Prostate gland (tissue), 2 donors: ENCODE measurements at regions of chr5 and their contacts with region 1.

Region 1: DNA sequence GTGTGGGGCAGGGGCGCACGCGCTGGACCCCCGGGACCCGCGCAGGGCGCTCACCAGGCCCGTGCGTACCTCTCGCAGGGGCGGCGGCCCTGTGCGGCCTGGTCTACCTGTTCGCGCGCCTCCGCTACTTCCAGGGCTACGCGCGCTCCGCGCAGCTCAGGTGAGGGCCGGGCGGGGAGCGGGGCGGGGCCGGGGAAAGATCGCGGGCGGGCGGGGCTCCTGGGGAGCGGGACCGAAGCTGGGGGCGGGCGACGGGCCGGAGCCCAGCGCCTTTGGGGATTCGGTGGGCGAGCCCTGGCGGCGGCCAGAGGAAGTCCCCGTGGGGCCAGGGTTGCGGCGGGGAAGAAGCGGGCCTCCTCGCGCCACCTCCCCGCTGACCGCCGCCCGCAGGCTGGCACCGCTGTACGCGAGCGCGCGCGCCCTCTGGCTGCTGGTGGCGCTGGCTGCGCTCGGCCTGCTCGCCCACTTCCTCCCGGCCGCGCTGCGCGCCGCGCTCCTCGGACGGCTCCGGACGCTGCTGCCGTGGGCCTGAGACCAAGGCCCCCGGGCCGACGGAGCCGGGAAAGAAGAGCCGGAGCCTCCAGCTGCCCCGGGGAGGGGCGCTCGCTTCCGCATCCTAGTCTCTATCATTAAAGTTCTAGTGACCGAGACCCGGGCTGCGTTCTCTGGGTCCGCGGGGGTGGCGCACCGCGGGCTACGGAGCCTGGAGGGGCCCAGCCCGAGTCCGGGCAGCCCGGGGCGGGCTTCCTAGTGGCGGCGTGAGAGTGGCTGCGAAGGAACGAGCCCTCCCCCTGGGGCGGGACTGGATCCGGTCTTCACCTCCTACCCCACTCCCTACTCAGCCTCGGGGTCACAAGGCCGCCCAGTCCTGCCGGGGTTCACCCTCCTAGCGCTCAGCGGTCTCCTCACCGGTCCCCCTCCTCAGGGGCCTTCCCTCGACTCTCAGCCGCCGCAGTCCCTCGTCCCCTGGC is 2.4 kb downstream of the LTC4S start:
- DNase-seq: peak; percentile 81
- H3K4me3 ChIP-seq: peak overlapping the region; percentile 44 to 57
- H3K27ac ChIP-seq: peak overlapping the region; percentile 94
- H3K4me1 ChIP-seq: peaks cover 12% of the 10 kb centered on the region
- H3K27me3 ChIP-seq: no peaks in the 10 kb centered on the region
- CTCF ChIP-seq: peak; percentile 86 to 96 (median 92)
- POLR2A ChIP-seq: peak; percentile 44

Region 2: DNA sequence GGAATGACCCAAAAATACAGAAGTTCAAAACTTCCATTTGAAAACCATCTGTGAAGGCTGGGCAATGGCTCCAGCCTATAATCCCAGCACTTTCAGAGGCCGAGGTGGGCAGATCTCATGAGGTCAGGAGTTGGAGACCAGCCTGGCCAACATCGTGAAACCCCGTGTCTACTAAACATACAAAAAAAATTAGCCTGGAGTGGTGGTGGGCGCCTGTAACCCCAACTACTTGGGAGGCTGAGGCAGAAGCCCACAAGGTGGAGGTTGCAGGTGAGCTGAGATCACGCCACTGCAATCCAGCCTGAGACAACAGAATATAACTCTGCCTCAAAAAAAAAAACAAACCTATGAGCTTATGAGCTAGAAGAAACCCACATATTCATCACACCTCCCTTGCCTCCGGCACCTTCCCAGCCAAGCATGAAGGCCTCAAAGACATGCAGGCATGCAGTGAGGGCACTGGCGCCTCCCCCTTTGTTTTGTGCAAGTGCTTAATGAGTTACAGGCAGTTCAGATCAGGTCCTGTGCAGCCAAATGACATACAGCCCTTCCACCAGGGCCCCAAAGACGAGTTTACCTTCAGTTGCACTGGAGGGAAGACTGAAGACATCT is 182.6 kb before region 1 on chr5:
- intact Hi-C with region 1: no loop called
- DNase-seq: no peak
- H3K4me3 ChIP-seq: no peak overlapping the region
- H3K27ac ChIP-seq: no peak overlapping the region
- H3K4me1 ChIP-seq: peaks cover 4% of the 10 kb centered on the region
- H3K27me3 ChIP-seq: no peaks in the 10 kb centered on the region
- CTCF ChIP-seq: no peak
- POLR2A ChIP-seq: no peak

Region 3: DNA sequence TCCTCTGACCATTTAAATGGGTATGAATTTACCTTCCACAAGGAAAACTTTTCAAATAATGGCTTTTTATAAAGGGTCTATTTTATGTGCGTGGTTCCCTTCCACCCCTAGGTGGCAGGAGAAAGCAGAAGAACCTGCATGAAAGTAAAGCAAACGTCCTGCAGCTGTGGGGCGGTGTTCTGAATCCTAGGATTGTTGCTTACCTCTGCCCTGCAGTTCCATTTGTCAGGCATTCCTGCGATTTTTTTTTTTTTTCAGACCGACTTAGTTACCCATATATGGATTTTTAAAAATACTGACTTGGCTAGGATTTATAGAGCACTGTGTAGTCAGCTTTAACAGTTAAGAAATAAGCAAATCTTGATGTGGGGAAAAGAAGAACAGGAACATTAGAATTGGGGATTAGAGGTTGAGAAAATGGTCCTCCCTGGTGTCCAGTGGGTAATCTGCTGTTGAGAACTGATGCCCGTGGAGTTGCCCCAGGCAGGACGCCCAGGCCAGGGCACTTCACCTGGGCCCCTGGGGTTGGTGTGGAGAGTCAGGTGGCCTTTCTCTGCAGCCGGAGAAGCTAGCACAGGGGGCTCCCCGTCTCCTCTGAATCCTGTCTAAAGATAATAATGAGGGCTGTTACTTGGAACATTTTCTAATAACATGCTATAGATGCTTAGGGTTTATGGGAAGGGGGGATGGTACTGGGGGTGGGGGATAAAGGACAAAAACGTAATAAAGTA is 32.8 kb before region 1 on chr5:
- intact Hi-C with region 1: loop called (anchors 5 kb)
- DNase-seq: peak; percentile 67
- H3K4me3 ChIP-seq: no peak overlapping the region
- H3K27ac ChIP-seq: peak overlapping the region in 1 of 2 donors; percentile 15
- H3K4me1 ChIP-seq: peaks cover 6% of the 10 kb centered on the region
- H3K27me3 ChIP-seq: no peaks in the 10 kb centered on the region
- CTCF ChIP-seq: peak; percentile 56 to 88 (median 83)
- POLR2A ChIP-seq: no peak

Region 4: DNA sequence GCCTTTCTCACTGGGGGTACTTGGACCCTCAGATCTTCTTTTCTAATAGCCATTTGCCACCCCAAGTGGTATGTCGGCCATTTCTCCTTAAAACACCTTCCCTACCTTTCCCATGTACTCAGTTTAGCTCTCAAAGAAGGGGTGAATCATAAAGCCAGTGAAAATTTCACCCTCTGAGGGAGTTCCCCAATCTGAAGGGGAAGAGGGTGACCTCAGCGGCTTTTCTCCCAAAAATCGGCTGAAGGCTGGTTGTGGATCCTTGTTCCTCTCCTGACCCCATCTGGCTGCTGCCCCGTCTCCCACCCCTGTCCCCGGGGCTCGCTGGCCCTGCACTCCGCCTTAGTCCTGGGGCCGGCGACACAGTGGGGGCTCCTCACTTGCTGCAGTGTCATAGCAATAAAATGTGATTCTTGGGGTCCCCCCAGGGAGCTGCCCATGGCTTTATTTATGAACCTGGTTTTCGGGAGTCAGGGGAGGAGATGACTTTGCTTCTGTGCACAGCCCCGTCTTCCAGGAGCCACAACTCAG is 19.7 kb before region 1 on chr5:
- intact Hi-C with region 1: loop called (anchors 1 kb)
- DNase-seq: no peak
- H3K4me3 ChIP-seq: no peak overlapping the region
- H3K27ac ChIP-seq: no peak overlapping the region
- H3K4me1 ChIP-seq: peaks cover 2% of the 10 kb centered on the region
- H3K27me3 ChIP-seq: no peaks in the 10 kb centered on the region
- CTCF ChIP-seq: no peak
- POLR2A ChIP-seq: no peak

Region 5: DNA sequence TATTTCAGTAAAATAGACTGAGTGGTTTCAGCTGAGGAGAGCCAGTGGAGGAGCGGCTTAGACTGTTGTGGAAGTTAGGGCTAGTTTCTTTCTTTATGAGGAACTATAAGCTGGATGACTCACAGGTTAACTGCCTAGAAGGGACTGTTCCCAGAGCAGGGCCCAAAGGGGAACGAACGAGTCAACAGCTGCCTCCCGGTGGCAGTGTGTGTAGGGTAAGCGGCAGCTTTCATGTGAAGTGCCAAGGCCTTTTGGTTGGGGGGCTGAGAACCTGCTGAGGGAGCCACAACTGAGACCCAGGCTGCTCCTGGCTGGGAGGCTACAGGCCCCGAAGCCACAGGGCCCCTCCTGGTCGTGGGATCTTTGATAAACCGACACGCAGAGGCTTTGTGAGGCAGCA is 31.5 kb after region 1 on chr5:
- intact Hi-C with region 1: no loop called
- DNase-seq: peak; percentile 38
- H3K4me3 ChIP-seq: no peak overlapping the region
- H3K27ac ChIP-seq: peak overlapping the region in 1 of 2 donors; percentile 55
- H3K4me1 ChIP-seq: peaks cover 20% of the 10 kb centered on the region
- H3K27me3 ChIP-seq: no peaks in the 10 kb centered on the region
- CTCF ChIP-seq: no peak
- POLR2A ChIP-seq: no peak

Region 6: GRCh38 chr5:179840766-179841165 is 44.6 kb after region 1 on chr5:
- intact Hi-C with region 1: no loop called
- DNase-seq: no peak
- H3K4me3 ChIP-seq: no peak overlapping the region
- H3K27ac ChIP-seq: no peak overlapping the region
- H3K4me1 ChIP-seq: no peaks in the 10 kb centered on the region
- H3K27me3 ChIP-seq: no peaks in the 10 kb centered on the region
- CTCF ChIP-seq: no peak
- POLR2A ChIP-seq: no peak